Activated CD4-positive, alpha-beta memory T cell treated with anti-CD3 and anti-CD28 coated beads for 36 hours (primary cell): ENCODE measurements at regions of chr10 and their contacts with region 1.

Region 1: DNA sequence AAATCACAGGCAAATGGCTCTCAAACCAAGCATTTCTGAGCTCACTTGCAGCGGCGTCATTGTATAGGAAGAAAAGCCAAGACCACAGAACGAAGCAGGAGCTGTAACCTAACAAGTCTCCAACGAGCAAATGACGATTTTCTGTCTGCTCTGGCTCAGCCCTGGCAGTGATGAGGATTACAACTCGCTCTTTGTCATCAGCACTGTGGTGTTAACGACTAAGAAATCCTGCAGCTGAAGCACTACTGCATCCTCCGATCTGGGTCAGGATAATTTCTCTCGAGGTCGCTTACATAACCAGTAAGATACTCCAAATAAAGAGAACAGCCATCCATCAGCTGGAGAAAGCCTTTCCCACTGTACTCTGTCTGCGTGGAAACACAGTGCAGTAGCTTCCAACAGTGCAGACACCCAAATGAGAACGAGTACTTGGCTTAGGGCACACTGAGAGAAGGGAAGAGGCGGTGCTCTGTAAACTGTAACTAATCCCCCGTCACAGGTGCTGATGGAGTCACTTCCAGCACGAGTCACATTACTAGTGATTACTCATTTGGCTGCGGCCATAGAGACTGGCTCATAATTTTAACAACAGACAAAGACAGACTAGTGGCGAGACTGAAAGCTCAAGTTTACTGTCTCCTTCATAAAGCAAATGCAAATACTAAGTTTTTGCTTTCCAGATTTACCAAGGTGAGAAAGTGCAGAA is 135.8 kb downstream of the NRBF2 start:
- DNase-seq: peak; percentile 89
- H3K4me3 Mint-ChIP-seq: peak overlapping the region; percentile 97
- H3K27ac Mint-ChIP-seq: peak overlapping the region; percentile 97
- H3K4me1 Mint-ChIP-seq: peaks cover 24% of the 10 kb centered on the region
- H3K27me3 Mint-ChIP-seq: no peaks in the 10 kb centered on the region

Region 2: GRCh38 chr10:62384057-62384446 is 884.9 kb before region 1 on chr10:
- CTCF ChIA-PET with region 1: no interaction called
- POLR2A ChIA-PET with region 1: no interaction called
- intact Hi-C with region 1: loop called (anchors 5 kb)
- DNase-seq: peak; percentile 73
- H3K4me3 Mint-ChIP-seq: no peak overlapping the region
- H3K27ac Mint-ChIP-seq: peak overlapping the region; percentile 48
- H3K4me1 Mint-ChIP-seq: peaks cover 61% of the 10 kb centered on the region
- H3K27me3 Mint-ChIP-seq: no peaks in the 10 kb centered on the region

Region 3: DNA sequence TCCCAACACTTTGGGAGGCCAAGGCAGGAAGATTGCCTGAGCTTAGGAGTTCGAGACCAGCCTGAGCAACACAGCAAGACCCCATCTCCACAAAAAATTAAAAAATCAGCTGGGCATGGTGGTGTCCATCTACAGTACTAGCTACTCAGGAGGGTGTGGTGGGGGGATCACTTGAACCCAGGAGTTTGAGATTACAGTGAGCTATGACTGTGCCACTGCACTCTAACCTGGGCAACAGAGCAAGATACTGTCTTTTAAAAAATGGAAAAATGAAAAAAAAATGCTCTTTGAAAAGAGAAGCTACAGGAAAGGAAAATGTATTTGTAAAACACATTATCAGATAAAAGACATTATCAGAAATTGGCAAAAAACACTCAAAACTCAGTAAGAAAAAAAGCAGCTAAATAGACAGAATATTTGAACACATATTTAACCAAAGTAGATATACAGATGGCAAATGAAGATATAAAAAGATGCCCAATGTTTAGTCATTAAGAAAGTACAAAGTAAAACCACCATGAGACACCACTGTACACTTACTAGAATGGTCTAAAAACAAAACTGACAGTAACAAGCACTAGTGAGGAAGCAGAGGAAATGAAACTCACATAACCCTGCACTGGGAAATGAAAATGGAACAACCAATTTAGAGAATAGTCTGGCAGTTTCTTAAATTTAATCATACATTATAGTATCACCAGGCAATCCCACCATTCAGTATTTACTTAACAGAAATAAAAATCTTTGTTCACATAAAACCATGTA is 95.3 kb before region 1 on chr10:
- CTCF ChIA-PET with region 1: no interaction called
- POLR2A ChIA-PET with region 1: no interaction called
- intact Hi-C with region 1: loop called (anchors 2 kb)
- DNase-seq: no peak
- H3K4me3 Mint-ChIP-seq: no peak overlapping the region
- H3K27ac Mint-ChIP-seq: peak overlapping the region; percentile 65
- H3K4me1 Mint-ChIP-seq: peaks cover 52% of the 10 kb centered on the region
- H3K27me3 Mint-ChIP-seq: no peaks in the 10 kb centered on the region

Region 4: DNA sequence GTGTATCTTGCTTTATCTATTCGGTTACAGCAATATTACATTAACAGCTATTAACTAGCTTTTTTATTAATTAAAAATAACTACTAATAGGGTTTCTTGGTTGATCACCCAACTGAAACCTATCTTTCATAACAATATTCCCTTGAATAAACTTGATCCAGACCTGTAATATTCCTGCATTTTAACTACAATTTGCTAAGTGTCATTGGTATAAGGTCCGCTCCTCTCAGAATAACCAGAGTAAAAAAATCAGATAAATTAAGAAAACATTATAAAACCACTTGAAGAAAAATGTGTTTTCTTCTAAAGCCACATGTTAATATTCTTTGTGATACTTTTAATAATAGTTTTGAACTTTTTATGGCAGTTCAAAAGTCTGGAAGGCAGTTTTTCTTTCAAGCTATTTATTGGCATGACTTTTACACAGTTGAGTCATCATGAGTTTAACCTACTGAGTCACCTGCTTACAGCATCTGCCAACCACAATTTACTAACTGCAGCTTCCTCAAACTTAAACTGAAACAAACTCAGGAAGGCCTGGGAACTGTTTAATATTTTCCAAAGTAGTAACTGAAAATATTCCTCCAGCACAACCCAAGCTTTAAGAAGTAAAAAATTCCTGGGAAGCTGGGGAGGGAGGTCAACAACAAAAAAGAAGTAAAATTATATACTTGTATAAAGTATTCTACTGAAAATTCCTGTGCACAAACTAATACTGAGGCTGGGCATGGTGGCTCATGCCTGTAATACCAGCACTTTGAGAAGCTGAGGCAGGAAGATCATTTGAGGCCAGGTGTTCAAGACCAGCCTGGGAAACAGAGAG is 32.6 kb before region 1 on chr10:
- CTCF ChIA-PET with region 1: interaction called, 3 read pairs
- POLR2A ChIA-PET with region 1: interaction called, 13 read pairs
- intact Hi-C with region 1: loop called (anchors 1 kb)
- DNase-seq: no peak
- H3K4me3 Mint-ChIP-seq: no peak overlapping the region
- H3K27ac Mint-ChIP-seq: peak overlapping the region; percentile 38
- H3K4me1 Mint-ChIP-seq: peaks cover 55% of the 10 kb centered on the region
- H3K27me3 Mint-ChIP-seq: no peaks in the 10 kb centered on the region

Region 5: DNA sequence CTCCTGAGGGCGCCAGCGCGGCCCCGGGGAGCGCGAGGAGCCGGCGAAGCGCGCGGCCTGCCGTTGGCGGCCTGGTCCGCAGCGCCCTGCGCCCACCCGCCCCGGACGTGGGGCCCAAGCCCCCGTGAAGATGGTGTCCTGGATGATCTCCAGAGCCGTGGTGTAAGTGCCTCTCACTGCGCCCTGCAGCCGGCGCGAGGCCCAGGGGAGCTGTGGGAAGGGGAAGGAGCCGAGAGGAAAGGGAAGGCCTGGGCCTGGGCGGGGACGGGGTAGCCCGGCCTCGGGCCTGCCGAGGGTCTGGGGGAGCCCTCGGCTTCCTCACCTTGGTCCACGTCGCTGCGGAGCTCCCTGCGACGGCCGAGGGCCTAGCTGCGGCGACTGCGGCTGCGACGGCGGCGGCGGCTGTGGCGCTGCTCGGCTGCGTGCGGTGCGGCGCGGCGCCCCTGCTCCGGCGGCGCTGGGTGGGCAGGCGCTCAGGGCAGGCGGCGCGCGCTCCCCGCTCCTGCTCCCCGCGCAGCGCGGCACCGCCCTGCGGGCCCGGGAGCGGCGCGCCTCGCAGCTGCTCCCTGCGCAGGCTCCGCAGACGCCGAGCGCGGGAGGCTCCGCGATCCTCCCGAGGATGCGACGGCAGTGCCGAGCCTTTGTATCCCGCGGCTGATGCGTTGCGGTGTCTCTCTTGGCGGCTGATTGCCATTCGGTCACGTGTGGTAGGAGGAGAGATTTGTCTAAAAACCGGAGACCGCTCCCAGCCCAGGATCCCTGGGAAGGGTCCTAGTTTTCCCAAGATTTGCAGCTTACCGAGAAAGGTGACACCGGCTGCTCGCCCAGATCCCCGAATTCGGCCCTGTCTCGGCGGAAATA is 252.7 kb after region 1 on chr10:
- CTCF ChIA-PET with region 1: interaction called, 5 read pairs
- POLR2A ChIA-PET with region 1: interaction called, 17 read pairs
- intact Hi-C with region 1: loop called (anchors 2 kb)
- DNase-seq: peak; percentile 64
- H3K4me3 Mint-ChIP-seq: peak overlapping the region; percentile 87
- H3K27ac Mint-ChIP-seq: peak overlapping the region; percentile 92
- H3K4me1 Mint-ChIP-seq: peaks cover 63% of the 10 kb centered on the region
- H3K27me3 Mint-ChIP-seq: no peaks in the 10 kb centered on the region

Region 6: GRCh38 chr10:63707254-63707910 is 438.4 kb after region 1 on chr10:
- CTCF ChIA-PET with region 1: no interaction called
- POLR2A ChIA-PET with region 1: no interaction called
- intact Hi-C with region 1: loop called (anchors 1 kb)
- DNase-seq: peak; percentile 48
- H3K4me3 Mint-ChIP-seq: no peak overlapping the region
- H3K27ac Mint-ChIP-seq: peak overlapping the region; percentile 20
- H3K4me1 Mint-ChIP-seq: peaks cover 12% of the 10 kb centered on the region
- H3K27me3 Mint-ChIP-seq: no peaks in the 10 kb centered on the region